Caco-2 (cell line): ENCODE measurements at regions of chr4 and their contacts with region 1.

Region 1: DNA sequence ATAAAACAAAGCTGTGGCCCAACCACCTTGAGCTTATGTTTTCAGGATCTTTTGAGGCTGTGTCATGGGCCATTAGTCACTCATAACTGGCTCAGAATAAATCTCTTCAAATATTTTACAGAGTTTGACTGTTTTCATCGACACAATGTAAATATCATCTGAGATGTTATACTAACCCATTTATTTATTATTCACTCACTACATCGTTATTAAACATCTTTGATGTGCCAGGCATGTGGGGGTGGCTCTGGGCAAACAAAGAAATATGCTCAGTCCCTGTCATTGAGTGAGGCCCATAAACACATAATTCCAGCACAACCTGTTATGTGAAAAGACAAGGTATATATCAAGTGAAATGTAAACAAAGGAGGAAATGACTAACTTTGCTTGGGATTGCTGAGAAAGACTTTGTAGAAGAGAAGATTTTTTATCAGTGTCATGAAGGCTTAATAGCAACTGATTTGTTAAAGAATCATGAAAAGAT is 34.5 kb upstream of the PPM1K start:
- DNase-seq: peak in 1 of 2 experiments; percentile 32
- H3K4me3 ChIP-seq: no peak overlapping the region
- H3K4me3 Mint-ChIP-seq: peak overlapping the region; percentile 49
- H3K27ac Mint-ChIP-seq: peak overlapping the region; percentile 86
- H3K4me1 ChIP-seq: peaks cover 36% of the 10 kb centered on the region
- H3K4me1 Mint-ChIP-seq: peaks cover 19% of the 10 kb centered on the region
- H3K27me3 ChIP-seq: no peaks in the 10 kb centered on the region
- H3K27me3 Mint-ChIP-seq: no peaks in the 10 kb centered on the region
- CTCF ChIP-seq: no peak

Region 2: DNA sequence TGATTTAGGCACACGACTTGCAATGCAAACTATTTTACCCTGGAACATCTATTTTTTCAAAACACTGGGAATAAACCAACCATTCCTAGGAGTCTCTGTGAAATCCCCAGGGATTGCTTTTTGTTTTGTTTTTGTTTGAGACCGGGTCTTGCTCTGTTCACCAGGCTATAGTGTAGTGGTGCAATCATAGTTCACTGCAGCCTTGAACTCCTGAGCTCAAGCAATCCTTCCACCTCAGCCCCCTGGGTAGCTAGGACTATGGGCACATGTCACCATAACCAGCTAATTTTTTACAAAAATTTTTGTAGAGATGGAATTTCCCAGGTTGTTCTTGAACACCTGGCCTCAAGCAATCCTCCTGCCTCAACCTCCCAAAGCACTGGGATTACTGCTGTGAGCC is 72.3 kb before region 1 on chr4:
- CTCF ChIA-PET with region 1: no interaction called
- POLR2A ChIA-PET with region 1: no interaction called
- intact Hi-C with region 1: loop called (anchors 2 kb)
- DNase-seq: no peak
- H3K4me3 ChIP-seq: no peak overlapping the region
- H3K4me3 Mint-ChIP-seq: no peak overlapping the region
- H3K27ac Mint-ChIP-seq: no peak overlapping the region
- H3K4me1 ChIP-seq: no peaks in the 10 kb centered on the region
- H3K4me1 Mint-ChIP-seq: no peaks in the 10 kb centered on the region
- H3K27me3 ChIP-seq: no peaks in the 10 kb centered on the region
- H3K27me3 Mint-ChIP-seq: no peaks in the 10 kb centered on the region
- CTCF ChIP-seq: no peak